HepG2 (cell line): ENCODE measurements at regions of chr3 and their contacts with region 1.

Region 1: GRCh38 chr3:64023187-64023848 is at the start of gene PSMD6:
- DNase-seq: peak; percentile 68
- ATAC-seq: peak; percentile 97
- H3K4me3 ChIP-seq: peak within 1 kb of the TSS; percentile 86 to 95 (median 90)
- H3K27ac ChIP-seq: peak within 1 kb of the TSS; percentile 77
- H3K4me1 ChIP-seq: peaks cover 29% of the 10 kb centered on the region
- H3K27me3 ChIP-seq: no peaks in the 10 kb centered on the region
- CTCF ChIP-seq: peak; percentile 99
- EP300 ChIP-seq: 0 out of 4 replicates have a peak, but pooled peaks of 1 of the 2 experiments have one; percentile 19
- POLR2A ChIP-seq: peak; percentile 82 to 83
- RAD21 ChIP-seq: peak; percentile 67
- total RNA-seq, gene PSMD6: 117 and 169 TPM in 2 replicates

Region 2: DNA sequence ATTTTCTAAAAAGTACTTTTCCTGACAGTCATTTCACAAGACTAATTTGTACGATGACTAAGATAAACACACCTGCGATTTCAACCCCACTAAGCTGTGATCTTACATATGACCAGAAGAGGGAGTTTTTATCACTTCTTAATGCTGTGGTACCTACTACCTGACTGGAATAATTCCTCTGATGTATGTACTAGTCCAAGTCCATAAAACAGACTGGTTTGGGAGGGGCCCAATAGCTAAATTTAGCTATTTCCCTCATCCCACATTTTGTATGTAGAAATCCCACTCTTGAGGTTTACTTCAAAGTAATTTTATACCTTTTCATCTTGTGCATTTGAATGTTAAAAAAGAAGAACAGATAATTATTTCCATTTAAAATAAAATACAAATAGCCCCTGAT is 61.4 kb before region 1 on chr3:
- CTCF ChIA-PET with region 1: no interaction called
- POLR2A ChIA-PET with region 1: no interaction called
- in situ Hi-C with region 1: no loop called
- intact Hi-C with region 1: loop called (anchors 5 kb)
- DNase-seq: peak; percentile 52
- ATAC-seq: peak; percentile 88
- H3K4me3 ChIP-seq: no peak overlapping the region
- H3K27ac ChIP-seq: no peak overlapping the region
- H3K4me1 ChIP-seq: peaks cover 11% of the 10 kb centered on the region
- H3K27me3 ChIP-seq: no peaks in the 10 kb centered on the region
- CTCF ChIP-seq: peak; percentile 69
- EP300 ChIP-seq: no peak
- POLR2A ChIP-seq: no peak
- RAD21 ChIP-seq: peak; percentile 38; the same call in 1 of the 2 replicates